ENCODE measurements at regions of chr2 and their contacts with region 1.

Region 1: DNA sequence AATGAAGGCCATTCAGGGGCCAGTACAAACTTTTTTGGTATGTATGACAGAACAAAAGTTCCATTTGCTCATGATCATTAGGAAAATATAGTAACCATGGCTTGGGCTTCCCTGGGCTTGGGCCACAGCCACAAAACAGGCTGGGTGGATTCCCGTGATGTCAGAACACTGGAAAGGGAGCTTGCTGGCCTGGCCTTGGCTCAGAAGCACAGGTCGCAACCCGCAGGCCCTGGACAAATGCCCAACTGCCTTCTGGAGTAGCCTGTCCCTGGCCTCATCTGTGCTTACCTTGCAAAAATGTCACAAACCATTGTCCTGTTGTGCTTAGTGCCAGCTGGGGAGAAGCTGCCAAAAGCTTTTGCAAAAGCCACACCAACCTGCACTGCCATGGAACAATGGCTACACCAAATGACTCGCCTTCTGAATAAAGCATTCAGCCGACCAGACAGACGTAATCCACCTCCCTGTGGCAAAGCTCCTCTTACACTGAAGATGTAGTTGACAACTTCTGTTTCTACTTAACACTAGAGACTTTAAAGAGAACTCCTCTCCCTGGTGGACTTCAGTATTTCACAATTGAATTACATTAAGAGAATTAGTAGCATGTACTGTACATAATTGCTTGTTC is 125.5 kb downstream of the ANKRD44 start:
- DNase-seq: peak; percentile 83 to 91
- ATAC-seq: peak; percentile 92 to 96 (median 96)
- H3K4me3 ChIP-seq: no peak overlapping the region
- H3K27ac ChIP-seq: peak overlapping the region; percentile 77
- H3K4me1 ChIP-seq: peaks cover 17% of the 10 kb centered on the region
- H3K27me3 ChIP-seq: no peaks in the 10 kb centered on the region
- CTCF ChIP-seq: no peak

Region 2: DNA sequence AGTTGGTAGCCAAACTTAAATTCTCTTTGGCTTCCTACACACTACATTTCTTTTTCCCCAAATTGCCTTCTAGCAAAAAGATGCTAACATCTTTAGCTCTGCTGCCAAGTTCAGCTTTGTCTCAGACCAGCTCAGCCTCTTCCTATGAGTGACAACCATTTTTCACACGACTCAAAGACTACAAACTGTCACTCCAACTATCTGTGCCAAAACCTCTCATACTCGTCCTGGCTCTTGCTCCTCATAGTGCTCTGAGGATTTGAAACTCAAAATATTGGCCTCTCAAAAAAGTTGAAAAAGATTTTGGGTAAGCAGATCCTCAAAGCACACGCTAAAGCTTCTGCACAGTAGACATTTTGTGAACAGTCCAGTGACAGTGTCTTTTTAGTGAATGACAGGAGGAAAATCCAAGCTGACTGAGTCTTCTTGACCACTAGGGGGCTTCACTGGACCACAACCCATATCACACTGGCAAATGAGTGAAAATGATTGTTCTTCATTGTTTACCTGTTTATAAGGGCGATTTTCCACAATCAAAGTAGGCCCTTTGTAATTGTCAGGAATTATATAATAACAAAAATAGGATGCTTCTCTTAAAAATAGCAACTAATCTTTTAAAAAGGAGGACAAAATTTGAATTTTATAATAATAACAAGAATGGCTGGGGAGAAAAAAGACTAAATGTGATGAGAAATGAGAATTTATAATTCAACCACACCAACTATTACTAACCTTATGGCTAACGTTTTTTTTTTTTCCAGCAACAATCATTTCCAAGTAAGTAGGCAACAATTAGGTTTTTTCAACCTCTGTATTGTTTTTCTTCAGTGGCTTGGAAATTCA is 173.1 kb before region 1 on chr2:
- intact Hi-C with region 1: loop called in 1 of 2 experiments (anchors 10 kb)
- DNase-seq: no peak
- ATAC-seq: peak; percentile 49 to 78 (median 68)
- H3K4me3 ChIP-seq: no peak overlapping the region
- H3K27ac ChIP-seq: no peak overlapping the region
- H3K4me1 ChIP-seq: no peaks in the 10 kb centered on the region
- H3K27me3 ChIP-seq: no peaks in the 10 kb centered on the region
- CTCF ChIP-seq: peak; percentile 83

Measured in psoas muscle (tissue), 8 donors.